Activated B cell treated with CpG ODN at 0.5 μM for 24 hours (primary cell): ENCODE measurements at regions of chr16 and their contacts with region 1.

Region 1: GRCh38 chr16:17416461-17417311 is 54.1 kb downstream of the XYLT1 start:
- DNase-seq: peak; percentile 57
- ATAC-seq: peak; percentile 86
- H3K4me3 Mint-ChIP-seq: peak overlapping the region; percentile 77
- H3K27ac Mint-ChIP-seq: peak overlapping the region; percentile 95
- H3K4me1 Mint-ChIP-seq: peaks cover 68% of the 10 kb centered on the region
- H3K27me3 Mint-ChIP-seq: no peaks in the 10 kb centered on the region
- CTCF ChIP-seq: no peak

Region 2: GRCh38 chr16:17070882-17071592 is 345.6 kb before region 1 on chr16:
- CTCF ChIA-PET with region 1: no interaction called
- POLR2A ChIA-PET with region 1: no interaction called
- intact Hi-C with region 1: loop called (anchors 1 kb)
- DNase-seq: peak; percentile 67
- ATAC-seq: peak; percentile 82
- H3K4me3 Mint-ChIP-seq: peak overlapping the region; percentile 88
- H3K27ac Mint-ChIP-seq: peak overlapping the region; percentile 98
- H3K4me1 Mint-ChIP-seq: peaks cover 59% of the 10 kb centered on the region
- H3K27me3 Mint-ChIP-seq: no peaks in the 10 kb centered on the region
- CTCF ChIP-seq: no peak

Region 3: DNA sequence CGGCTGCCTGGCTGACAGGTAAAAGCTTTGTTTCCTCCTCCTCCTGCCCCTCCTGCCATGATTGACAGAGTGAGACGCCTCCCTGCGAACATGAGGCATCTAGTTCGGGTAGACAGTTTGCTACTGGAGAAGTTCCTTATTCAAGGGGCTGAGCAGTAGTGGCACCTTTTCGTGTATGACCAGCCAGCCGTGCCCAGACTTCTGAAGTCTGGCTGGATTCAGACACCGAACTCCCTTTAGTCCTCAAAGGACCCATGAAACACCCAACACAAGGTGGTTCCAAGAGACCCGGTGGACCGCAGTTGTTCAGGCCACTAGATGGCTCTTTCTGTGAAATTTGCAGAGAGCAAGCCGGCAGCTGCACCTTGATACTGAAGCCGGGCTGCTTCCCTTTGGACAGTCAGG is 138.7 kb before region 1 on chr16:
- CTCF ChIA-PET with region 1: interaction called, 7 read pairs
- POLR2A ChIA-PET with region 1: no interaction called
- intact Hi-C with region 1: loop called (anchors 2 kb)
- DNase-seq: peak; percentile 25
- ATAC-seq: peak; percentile 55
- H3K4me3 Mint-ChIP-seq: peak overlapping the region; percentile 32
- H3K27ac Mint-ChIP-seq: no peak overlapping the region
- H3K4me1 Mint-ChIP-seq: peaks cover 77% of the 10 kb centered on the region
- H3K27me3 Mint-ChIP-seq: no peaks in the 10 kb centered on the region
- CTCF ChIP-seq: no peak

Region 4: GRCh38 chr16:17369421-17370222 is 47.1 kb before region 1 on chr16:
- CTCF ChIA-PET with region 1: no interaction called
- POLR2A ChIA-PET with region 1: interaction called, 27 read pairs
- intact Hi-C with region 1: loop called (anchors 1 kb)
- DNase-seq: no peak
- ATAC-seq: peak; percentile 82
- H3K4me3 Mint-ChIP-seq: peak overlapping the region; percentile 80
- H3K27ac Mint-ChIP-seq: peak overlapping the region; percentile 95
- H3K4me1 Mint-ChIP-seq: peaks cover 87% of the 10 kb centered on the region
- H3K27me3 Mint-ChIP-seq: no peaks in the 10 kb centered on the region
- CTCF ChIP-seq: no peak

Region 5: GRCh38 chr16:17459530-17460521 is 43.1 kb after region 1 on chr16:
- CTCF ChIA-PET with region 1: interaction called, 10 read pairs
- POLR2A ChIA-PET with region 1: interaction called, 29 read pairs
- intact Hi-C with region 1: loop called (anchors 1 kb)
- DNase-seq: peak; percentile 40
- ATAC-seq: peak; percentile 87
- H3K4me3 Mint-ChIP-seq: peak overlapping the region; percentile 77
- H3K27ac Mint-ChIP-seq: peak overlapping the region; percentile 65
- H3K4me1 Mint-ChIP-seq: peaks cover 55% of the 10 kb centered on the region
- H3K27me3 Mint-ChIP-seq: no peaks in the 10 kb centered on the region
- CTCF ChIP-seq: no peak

Region 6: DNA sequence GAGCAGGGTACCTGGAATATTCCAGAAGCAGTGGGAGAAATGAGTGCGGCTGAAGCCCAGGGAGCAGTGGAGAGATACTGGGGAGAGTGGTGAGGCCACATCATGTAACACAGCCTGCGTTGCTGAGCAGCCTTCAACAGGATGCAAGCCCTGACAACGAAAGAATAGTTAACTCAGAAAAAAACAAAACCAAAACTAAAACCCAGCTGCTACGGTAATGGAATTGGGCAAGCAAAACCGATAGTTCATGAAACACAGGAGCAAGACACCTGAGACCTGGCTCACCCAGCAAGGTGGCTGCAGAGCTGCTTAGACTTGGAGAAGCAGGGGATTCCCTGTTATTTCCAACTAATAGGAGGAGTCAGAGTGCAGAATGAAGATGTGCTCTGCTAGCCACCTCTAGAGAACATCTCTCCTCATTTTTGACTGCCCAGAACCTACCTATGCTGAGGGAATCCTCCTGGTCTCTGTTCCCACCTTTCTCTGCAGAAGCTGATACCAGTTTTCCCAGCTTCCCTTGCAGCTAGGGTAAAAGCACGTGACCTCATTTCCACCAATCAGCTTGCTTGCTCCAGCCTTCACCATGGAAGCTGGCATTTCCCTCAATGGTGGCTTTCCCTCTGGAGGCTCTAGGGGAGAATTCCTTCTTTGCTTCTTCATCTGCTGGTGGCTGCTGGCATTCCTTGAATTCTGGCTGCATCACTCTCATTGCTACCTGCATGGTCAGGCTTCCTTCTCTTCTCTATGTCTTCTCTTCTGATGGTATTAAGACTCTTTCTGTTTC is 113.5 kb after region 1 on chr16:
- CTCF ChIA-PET with region 1: no interaction called
- POLR2A ChIA-PET with region 1: no interaction called
- intact Hi-C with region 1: loop called (anchors 5 kb)
- DNase-seq: no peak
- ATAC-seq: peak; percentile 78
- H3K4me3 Mint-ChIP-seq: peak overlapping the region; percentile 79
- H3K27ac Mint-ChIP-seq: peak overlapping the region; percentile 54
- H3K4me1 Mint-ChIP-seq: peaks cover 25% of the 10 kb centered on the region
- H3K27me3 Mint-ChIP-seq: peaks cover 2% of the 10 kb centered on the region
- CTCF ChIP-seq: no peak

Region 7: DNA sequence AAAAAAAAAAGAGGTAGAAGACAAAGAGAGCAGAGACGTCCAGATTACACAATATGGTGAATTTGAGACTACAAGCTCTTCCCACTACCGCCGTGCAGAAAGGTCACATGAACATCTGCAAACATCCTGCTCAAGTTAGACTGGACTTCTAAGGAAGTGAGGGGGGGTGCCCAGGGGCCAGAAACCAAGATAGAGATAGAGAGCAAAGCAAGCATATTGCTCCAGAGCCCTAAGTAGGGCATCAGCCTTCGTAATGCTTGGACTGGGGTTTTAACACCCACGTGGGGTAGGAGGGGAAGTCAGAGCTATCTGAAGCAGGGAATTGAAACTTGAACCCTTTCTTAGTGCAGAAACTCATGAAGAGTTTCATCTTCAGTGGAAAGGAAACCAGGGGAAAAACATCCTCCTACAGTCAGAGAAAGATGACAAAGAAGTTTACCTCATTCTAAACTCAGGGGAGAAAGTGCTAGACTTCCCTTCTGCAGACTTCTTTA is 1877.5 kb after region 1 on chr16:
- CTCF ChIA-PET with region 1: no interaction called
- POLR2A ChIA-PET with region 1: no interaction called
- intact Hi-C with region 1: no loop called
- DNase-seq: peak; percentile 18
- ATAC-seq: peak; percentile 88
- H3K4me3 Mint-ChIP-seq: peak overlapping the region; percentile 42
- H3K27ac Mint-ChIP-seq: peak overlapping the region; percentile 84
- H3K4me1 Mint-ChIP-seq: peaks cover 29% of the 10 kb centered on the region
- H3K27me3 Mint-ChIP-seq: peaks cover 7% of the 10 kb centered on the region
- CTCF ChIP-seq: no peak